ENCODE measurements at regions of chr17 and their contacts with region 1.

Region 1: DNA sequence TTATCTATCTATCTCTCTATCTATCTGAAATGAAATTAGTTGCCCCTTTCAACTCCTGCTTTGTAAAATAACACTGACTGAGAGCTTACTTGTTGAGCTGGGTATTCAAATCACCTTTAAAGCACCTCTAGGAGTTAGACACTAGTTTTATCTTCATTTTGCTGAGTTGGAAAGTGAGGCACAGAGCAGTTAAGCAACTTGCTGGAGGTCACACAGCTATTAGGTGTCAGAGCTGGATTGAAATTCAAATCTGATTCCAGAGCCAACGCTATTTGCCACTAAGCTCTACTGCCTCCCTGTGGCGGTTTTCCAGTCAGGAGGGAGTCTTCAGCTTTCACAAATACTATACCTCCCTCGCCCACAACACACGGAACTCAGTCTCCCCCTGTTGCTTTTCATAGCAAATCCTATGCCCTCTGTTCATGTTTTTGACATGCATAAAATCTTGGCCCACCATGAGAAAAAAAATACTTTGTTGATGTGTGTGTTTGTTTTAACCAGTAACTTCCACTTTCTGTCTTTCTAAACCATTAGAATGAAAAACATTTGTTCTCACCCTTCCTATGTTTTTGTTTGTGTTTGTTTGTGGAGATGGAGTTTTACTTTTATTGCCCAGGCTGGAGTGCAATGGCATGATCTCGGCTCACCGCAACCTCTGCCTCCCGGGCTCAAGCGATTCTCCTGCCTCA is 74.8 kb upstream of the SMURF2 start:
- DNase-seq: peak; percentile 21
- H3K4me3 ChIP-seq: no peak overlapping the region
- H3K27ac ChIP-seq: no peak overlapping the region
- H3K27me3 ChIP-seq: no peaks in the 10 kb centered on the region
- CTCF ChIP-seq: peak; percentile 64

Region 2: GRCh38 chr17:64547319-64547718 is 189.6 kb before region 1 on chr17:
- CTCF ChIA-PET with region 1: interaction called, 12 read pairs
- POLR2A ChIA-PET with region 1: no interaction called
- DNase-seq: no peak
- H3K4me3 ChIP-seq: no peak overlapping the region
- H3K27ac ChIP-seq: no peak overlapping the region
- H3K27me3 ChIP-seq: no peaks in the 10 kb centered on the region
- CTCF ChIP-seq: no peak

Region 3: GRCh38 chr17:64638552-64639203 is 98.3 kb before region 1 on chr17:
- CTCF ChIA-PET with region 1: interaction called, 10 read pairs
- POLR2A ChIA-PET with region 1: interaction called, 5 read pairs
- DNase-seq: no peak
- H3K4me3 ChIP-seq: no peak overlapping the region
- H3K27ac ChIP-seq: no peak overlapping the region
- H3K27me3 ChIP-seq: no peaks in the 10 kb centered on the region
- CTCF ChIP-seq: no peak

Region 4: DNA sequence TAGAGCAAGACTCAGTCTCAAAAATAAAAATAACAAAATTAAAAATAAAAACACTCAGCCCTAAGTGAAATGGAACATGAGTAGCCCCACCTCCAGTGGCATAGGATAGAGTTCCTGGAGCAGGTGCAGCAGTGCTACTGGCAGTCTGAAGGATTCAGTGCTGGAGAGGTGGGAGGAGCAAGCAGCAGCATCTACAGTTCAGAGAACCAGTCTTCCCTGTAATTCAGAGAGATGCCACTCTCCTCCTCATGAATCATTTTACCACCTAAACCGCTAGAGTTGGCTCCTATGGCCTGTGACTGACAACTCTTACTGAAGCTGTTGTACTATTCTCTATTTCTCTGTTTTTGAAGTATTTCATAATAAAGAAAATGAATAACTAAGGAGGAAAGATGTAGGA is 18.9 kb before region 1 on chr17:
- CTCF ChIA-PET with region 1: no interaction called
- POLR2A ChIA-PET with region 1: interaction called, 10 read pairs
- DNase-seq: no peak
- H3K4me3 ChIP-seq: no peak overlapping the region
- H3K27ac ChIP-seq: no peak overlapping the region
- H3K27me3 ChIP-seq: no peaks in the 10 kb centered on the region
- CTCF ChIP-seq: no peak

Region 5: DNA sequence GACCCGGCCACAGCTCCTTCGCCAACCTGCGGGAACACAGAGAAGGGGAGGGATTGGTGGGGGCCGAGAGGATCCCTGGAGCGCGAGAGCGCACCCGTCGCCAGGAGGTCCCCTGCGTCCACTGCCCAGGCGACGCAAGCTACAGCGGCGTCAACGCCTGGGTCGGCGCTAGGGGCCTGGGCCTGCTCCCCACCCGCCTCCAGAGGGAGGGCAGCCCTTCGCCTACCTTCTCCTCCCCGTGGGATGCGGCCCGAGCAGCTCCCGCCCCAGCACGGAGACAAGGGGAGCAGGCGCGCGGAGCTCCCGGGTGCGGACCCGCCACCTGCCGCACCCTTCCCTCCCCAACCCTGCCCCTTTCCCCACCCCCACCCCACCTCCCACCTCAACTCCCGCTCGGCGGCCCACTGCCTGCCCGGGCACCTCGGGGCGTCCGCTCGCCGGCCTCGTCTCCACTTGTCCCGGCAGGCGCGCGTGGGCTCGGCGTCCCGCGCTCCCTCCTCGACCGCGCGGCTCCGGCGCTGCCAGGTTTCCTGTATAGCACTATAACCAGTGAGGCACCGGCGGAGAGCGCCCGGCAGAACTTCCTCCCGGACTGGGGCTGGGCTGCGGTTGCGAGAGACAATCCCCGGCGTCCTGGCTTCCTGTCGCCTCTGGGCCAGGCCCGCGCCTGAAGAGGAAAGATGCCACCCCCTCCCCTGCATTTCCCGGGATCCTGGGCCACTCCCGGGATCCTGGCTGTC is 44.2 kb after region 1 on chr17:
- CTCF ChIA-PET with region 1: no interaction called
- POLR2A ChIA-PET with region 1: no interaction called
- DNase-seq: no peak
- H3K4me3 ChIP-seq: peak overlapping the region; percentile 13; the same call in 1 of the 2 replicates
- H3K27ac ChIP-seq: no peak overlapping the region
- H3K27me3 ChIP-seq: peaks cover 10% of the 10 kb centered on the region
- CTCF ChIP-seq: no peak

Measured in AG04450 (cell line).